Cardiac septum (tissue), 1 donor: ENCODE measurements at regions of chr2 and their contacts with region 1.

Region 1: GRCh38 chr2:36497570-36498163 is 100.3 kb downstream of the FEZ2 start:
- DNase-seq: no peak

Region 2: DNA sequence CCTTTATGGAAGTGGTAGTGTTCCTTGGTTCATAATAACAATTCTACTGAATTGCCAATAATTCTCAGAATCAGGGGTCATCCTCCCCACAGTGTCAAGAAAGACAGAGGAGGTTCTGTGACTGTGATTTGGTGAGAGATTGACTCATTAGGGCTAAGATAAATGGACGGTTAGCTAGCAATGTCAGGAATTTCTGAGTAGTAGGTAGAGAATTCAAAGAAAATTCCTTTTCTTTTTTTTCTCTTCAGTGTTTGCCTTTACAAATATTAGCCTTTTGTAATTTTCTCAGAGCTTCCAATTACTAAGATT is 158.9 kb before region 1 on chr2:
- intact Hi-C with region 1: no loop called
- DNase-seq: no peak

Region 3: GRCh38 chr2:36769106-36769505 is 271.4 kb after region 1 on chr2:
- intact Hi-C with region 1: loop called (anchors 5 kb)
- DNase-seq: no peak